Lower leg skin (tissue), 4 donors: ENCODE measurements at regions of chr3 and their contacts with region 1.

Region 1: DNA sequence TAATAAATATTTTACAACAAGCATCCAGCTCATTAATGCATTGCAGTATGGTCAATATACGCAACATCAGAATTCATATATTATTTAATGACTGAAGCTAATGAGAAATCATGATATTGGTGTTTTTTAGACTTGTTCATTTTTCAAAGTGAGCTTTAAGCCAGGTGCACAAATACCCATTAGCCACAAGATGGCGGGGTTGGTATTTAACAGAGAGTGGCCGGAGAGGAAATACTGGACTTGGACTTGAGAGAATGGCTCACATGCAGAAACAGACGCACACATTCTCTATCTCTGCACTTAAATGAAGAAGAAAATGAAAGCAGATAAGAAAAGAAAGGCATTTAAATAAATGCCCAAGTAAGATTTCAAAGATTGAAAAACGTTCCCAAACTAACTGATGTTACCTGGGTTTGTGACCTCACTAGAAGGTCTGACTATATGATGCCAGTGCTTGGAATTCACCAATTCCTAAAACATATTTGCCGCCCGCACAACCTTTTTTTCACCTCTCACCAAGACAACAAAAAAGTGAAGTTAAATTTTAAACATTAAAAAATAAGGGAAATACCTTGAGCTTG is 21.2 kb upstream of the CRBN start:
- DNase-seq: peak in 1 of 2 donors; percentile 36
- H3K4me3 ChIP-seq: no peak overlapping the region
- CTCF ChIP-seq: peak in 1 of 3 donors; percentile 35
- POLR2A ChIP-seq: no peak

Region 2: DNA sequence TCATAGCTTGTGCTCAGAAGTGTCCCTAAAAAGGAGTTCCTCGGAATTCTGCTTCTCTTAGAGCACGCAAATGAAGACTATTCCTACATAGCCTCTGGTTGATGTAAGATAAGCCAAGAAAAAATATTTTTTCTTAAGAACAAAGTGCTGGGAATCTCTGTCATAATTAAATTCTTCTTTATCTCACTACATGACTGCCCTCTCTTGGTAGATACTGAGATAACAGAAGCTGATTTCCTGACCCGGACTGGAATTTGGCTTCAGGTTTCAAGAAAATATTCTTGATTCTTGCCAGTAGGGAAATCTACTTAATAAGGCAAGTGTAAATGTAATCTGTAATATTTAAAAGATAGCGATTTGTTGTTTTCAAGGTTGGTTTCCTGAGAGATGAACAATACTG is 1071.1 kb after region 1 on chr3:
- intact Hi-C with region 1: loop called (anchors 5 kb)
- DNase-seq: no peak
- H3K4me3 ChIP-seq: no peak overlapping the region
- CTCF ChIP-seq: no peak
- POLR2A ChIP-seq: no peak